ENCODE measurements at regions of chr9 and their contacts with region 1.

Region 1: DNA sequence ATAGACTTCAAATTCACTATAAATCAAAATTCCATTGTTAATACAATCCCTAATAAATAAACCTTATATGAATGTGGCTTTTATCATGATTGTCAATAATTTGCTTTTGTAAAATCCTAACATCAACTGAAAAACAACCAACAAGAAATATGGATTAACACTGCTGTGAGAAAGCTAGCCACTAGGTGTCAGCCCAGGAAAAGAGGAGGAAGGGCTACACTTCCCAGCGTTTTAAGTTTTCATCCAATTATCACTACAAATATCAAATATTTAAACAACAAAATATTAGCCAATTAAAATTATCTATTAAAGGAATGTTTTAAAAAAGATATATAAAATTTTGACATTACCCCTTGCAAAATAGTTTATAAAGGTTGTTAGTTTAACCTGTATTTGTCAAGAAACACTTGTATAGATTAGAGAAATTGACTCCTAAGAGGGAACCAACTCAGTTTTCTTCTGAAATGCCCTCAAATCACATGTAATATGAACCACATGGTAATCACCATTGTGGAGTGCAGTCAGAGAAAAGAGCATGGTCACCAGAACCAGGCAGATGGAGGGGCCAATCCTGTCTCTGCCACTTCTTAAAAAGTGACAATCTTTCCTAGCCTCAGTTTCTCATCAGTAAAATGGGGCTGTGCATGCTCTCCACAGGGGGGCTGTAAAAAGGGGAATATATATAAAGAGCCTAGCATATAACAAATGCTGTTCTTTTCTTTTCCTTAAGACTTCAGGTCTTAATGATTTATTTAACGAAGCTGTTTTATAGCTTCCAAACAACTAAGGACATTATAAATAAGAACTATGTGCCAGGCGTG is 188.2 kb downstream of the CRB2 start:
- DNase-seq: no peak
- ATAC-seq: peak; percentile 57

Region 2: DNA sequence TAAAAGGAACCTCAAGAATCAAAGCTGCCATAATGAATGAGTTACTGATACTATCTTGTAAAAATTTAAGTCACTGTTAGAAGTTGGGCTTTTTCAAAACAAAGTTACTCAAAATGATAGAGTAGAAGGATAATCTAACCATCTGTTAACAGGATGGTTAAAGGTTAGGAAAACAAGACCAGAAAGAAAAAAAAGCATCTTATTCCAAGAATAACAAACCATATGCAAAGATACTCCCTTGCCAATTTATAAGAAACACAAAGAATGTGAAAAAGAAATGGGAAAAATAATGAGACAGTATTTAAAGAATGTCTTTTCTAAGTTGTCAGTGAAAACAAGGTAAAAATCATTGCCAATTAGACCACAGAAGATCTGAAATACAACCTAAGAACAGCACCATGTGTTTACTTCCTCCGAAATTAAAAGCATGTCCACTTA is 327.1 kb before region 1 on chr9:
- intact Hi-C with region 1: no loop called
- DNase-seq: no peak
- ATAC-seq: no peak

Region 3: DNA sequence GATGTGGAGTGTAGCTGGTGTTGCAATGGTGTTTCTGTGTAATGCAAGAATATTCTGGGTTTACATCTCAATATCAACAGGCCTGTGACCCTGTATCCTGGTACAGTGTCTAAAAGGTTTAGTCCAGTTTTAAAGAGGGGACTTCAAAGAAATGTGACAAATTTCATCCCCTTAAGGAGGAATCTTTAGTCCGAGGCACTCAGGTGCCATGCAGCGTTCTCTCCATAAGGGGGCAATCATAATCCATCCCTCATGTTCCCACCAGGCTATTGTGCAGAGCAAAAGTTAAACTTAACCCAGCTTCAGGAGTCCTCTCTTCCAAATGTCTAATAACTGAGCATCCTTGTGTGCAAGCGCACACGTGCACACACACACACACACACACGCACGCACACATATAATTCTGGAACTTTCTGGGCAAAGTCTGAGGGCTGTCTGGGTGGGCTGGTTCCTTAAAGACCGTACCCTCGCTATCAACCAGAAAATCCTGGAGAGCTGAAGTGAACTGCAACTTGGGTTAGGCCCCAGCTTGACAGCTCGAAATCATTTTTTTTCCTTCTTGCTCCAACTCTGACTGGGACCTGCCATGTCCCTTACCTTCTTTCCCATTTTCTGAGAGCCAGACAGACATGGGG is 142.2 kb before region 1 on chr9:
- intact Hi-C with region 1: loop called (anchors 5 kb)
- DNase-seq: no peak
- ATAC-seq: peak; percentile 91

Region 4: GRCh38 chr9:123608104-123608503 is 63.9 kb after region 1 on chr9:
- intact Hi-C with region 1: no loop called
- DNase-seq: no peak
- ATAC-seq: no peak